Endothelial cell of umbilical vein (primary cell): ENCODE measurements at regions of chr10 and their contacts with region 1.

Region 1: DNA sequence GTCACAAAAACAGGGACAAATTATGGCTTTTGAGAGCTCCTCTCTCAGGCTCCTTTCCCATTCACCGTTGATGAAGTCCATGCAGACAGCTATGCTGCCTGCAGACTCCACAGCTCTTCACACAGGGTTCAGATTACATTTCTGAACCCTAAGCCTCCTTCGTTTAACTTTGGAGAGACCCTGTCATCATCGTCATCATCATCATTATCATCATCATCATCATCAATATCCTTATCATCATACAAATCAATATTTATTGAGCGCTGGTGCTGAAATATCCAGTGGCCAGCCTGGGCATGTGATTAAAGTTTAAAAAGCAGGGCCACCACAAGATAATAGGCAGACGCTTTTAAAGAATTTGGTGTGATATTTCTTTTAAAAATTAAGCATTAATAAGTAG is 66.6 kb downstream of the FRMPD2 start:
- DNase-seq: no peak
- H3K4me3 ChIP-seq: no peak overlapping the region
- H3K27ac ChIP-seq: no peak overlapping the region
- H3K4me1 ChIP-seq: no peaks in the 10 kb centered on the region
- H3K27me3 ChIP-seq: peaks cover 3 to 8% of the 10 kb centered on the region in 2 experiments
- CTCF ChIP-seq: no peak
- POLR2A ChIP-seq: no peak

Region 2: GRCh38 chr10:48187713-48188485 is 20.0 kb before region 1 on chr10:
- CTCF ChIA-PET with region 1: no interaction called
- POLR2A ChIA-PET with region 1: no interaction called
- dilution Hi-C with region 1: no loop called
- intact Hi-C with region 1: loop called (anchors 1 kb)
- DNase-seq: no peak
- H3K4me3 ChIP-seq: no peak overlapping the region
- H3K27ac ChIP-seq: no peak overlapping the region
- H3K4me1 ChIP-seq: no peaks in the 10 kb centered on the region
- H3K27me3 ChIP-seq: peaks cover 0 to 3% of the 10 kb centered on the region in 2 experiments
- CTCF ChIP-seq: no peak
- POLR2A ChIP-seq: no peak

Region 3: DNA sequence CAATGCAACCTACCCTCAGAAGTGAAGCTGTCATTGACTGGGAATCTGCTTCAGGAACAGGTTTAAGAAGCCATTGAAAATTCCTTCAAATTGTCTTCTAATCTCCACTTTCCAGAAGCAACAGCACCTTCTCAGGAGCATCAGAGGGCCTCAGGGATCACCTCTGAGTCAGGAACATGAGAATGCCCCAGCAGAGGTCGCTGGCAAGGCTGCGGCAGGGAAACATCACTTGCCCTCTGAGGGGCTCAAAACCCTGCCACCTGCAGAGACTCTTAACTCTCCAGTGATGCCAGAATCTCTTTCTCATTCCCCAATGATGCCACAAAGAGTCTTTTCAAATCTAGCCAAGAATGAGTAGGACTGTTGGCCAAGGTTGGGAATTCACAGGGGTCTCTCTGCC is 92.7 kb after region 1 on chr10:
- CTCF ChIA-PET with region 1: no interaction called
- POLR2A ChIA-PET with region 1: no interaction called
- dilution Hi-C with region 1: no loop called
- intact Hi-C with region 1: no loop called
- DNase-seq: no peak
- H3K4me3 ChIP-seq: no peak overlapping the region
- H3K27ac ChIP-seq: no peak overlapping the region
- H3K4me1 ChIP-seq: peaks cover 3% of the 10 kb centered on the region
- H3K27me3 ChIP-seq: peaks cover 16 to 19% of the 10 kb centered on the region in 2 experiments
- CTCF ChIP-seq: no peak
- POLR2A ChIP-seq: no peak